Activated CD4-positive, alpha-beta T cell treated with anti-CD3 and anti-CD28 coated beads, Interleukin-2, amount 10 ng/mL, durations not matched to agents 24 days and 14 days (primary cell): ENCODE measurements at regions of chr16 and their contacts with region 1.

Region 1: GRCh38 chr16:88662843-88663606 is at the start of gene MVD:
- DNase-seq: peak; percentile 99
- H3K4me3 Mint-ChIP-seq: peak within 1 kb of the TSS; percentile 97
- H3K27ac Mint-ChIP-seq: peak within 1 kb of the TSS; percentile 93
- H3K4me1 Mint-ChIP-seq: peaks cover 23% of the 10 kb centered on the region
- H3K27me3 Mint-ChIP-seq: no peaks in the 10 kb centered on the region
- total RNA-seq, gene MVD: 95.7 and 102 TPM in 2 replicates

Region 2: GRCh38 chr16:88686439-88687253 is 23.6 kb after region 1 on chr16 and contains the start of gene SNAI3:
- intact Hi-C with region 1: loop called (anchors 1 kb)
- DNase-seq: peak; percentile 98
- H3K4me3 Mint-ChIP-seq: peak within 1 kb of the TSS; percentile 83
- H3K27ac Mint-ChIP-seq: peak within 1 kb of the TSS; percentile 37
- H3K4me1 Mint-ChIP-seq: peaks cover 43% of the 10 kb centered on the region
- H3K27me3 Mint-ChIP-seq: no peaks in the 10 kb centered on the region
- total RNA-seq, gene SNAI3: 3.0 and 3.3 TPM in 2 replicates